HEK293T (cell line): ENCODE measurements at regions of chr16 and their contacts with region 1.

Region 1: GRCh38 chr16:1964506-1965395 is at the start of gene RPS2:
- DNase-seq: peak; percentile 100

Region 2: DNA sequence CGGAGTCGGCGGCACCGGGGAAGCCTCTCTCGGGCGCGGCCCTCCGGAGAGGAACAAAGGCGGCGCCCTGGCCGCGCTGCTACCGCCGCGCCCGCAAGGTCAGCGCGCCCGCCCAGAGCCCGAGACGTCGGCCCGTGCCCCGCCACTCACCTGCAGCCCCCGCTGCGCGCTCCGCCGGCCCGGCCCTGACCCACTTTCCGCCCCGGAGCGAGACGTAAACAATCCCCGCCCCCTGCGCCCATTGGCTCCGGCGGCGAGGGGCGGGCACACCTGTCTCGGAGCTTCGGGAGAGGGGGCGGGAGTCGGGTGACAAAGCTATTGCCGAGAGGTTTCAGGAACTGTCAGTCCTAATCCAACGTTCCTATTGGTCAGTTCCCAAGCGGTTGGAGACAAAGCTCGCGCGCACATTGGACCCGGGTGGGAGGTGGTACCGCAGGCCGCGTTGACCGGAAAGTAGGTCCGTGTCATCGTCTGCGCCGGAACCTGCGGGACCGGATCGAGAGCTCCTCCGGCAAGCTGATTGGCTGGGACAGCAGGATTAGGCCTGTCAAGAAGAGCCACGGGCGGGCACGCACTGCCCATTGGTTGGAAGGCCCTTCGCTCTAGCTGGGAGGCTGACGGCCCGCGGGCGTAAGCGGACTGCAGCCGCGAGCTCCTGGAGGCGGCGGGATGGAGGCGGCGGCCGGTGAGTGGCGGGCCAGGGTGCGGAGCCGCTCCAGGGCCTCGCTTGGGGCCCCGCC is 182.2 kb before region 1 on chr16 and contains the starts of genes NUBP2 and SPSB3:
- CTCF ChIA-PET with region 1: no interaction called
- POLR2A ChIA-PET with region 1: interaction called, 12 read pairs
- DNase-seq: peak; percentile 94

Region 3: DNA sequence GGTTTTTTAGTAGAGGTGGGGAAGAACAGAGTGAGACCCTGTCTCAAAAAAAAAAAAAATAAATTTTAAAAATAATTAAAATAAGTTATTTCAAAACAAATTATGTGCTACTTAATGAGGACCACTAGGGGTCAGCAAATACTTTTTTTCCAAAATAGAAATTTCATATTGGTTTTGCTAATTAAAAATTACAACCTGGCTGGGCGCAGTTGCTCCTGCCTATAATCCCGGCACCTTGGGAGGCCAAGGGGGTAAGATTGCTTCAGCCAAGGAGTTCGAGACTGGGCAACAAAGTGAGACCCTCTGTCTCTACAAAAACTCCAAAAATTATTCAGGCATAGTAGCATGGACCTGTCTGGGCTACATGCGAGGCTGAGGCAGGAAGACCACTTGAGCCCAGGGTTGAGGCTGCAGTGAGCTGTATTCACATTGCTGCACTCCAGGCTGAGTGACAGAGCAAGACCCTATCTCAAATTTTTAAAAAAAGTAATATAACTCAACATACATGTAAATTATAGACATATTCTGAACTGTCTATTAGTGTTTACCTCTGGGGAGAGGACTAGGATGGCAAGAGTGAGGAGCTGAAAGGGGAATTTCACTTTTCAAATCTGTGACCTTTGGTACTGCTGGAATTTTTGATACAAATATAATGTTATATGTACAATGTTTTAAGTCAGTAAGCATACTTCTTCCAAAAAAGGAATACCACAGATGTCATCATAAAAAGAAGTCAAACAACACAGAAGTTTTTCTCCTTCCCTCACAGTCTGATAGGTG is 100.9 kb before region 1 on chr16:
- CTCF ChIA-PET with region 1: no interaction called
- POLR2A ChIA-PET with region 1: interaction called, 10 read pairs
- DNase-seq: no peak

Region 4: GRCh38 chr16:1890708-1891050 is 74.1 kb before region 1 on chr16:
- CTCF ChIA-PET with region 1: no interaction called
- POLR2A ChIA-PET with region 1: no interaction called
- DNase-seq: no peak

Region 5: DNA sequence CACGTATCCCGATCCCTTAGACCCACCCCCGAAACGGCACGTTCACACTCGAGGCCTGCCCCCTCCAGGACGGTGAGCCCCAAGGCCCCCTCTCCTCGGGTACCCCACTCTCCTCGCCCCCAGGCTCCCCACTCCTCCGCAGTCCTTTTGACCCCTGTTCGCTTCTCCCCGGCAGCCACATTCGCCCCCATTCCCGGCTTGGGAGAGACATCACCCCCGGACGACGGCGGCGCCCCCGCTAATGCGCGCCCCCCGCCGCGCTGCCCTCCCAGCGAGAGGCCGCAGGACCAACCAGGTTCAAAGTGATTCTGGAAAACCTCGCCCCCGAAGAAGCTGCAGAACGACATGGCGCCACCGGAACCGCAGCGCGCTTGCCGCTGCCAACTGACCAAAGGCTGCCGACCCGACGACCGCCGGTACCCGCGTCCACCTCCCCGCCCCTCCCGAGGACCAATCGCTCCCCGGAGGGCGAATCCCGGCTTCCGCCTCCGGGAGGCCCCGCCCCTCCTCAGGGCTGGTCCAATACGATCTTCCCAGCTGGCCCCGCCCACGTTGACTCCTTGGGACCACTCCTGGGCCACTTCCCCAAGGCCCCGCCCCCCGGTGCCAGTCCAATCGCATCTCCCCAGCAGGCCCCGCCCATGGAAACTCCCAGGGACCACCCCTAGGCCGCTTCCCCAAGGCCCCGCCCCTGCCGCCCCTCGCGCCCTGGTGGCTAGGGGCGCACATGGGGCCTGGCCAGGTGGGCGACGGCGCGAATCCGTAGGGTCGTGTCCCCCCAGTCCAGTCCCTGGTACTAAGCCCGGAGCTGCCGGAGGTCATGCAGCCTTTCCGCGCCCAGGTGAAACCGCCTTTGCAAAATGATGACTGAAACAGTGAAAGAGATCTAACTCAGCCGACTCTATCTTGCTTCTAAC is 21.7 kb before region 1 on chr16 and contains the start of gene MSRB1:
- CTCF ChIA-PET with region 1: interaction called, 11 read pairs
- POLR2A ChIA-PET with region 1: interaction called, 95 read pairs
- DNase-seq: peak; percentile 100

Region 6: GRCh38 chr16:1991948-1992703 is 27.4 kb after region 1 on chr16:
- CTCF ChIA-PET with region 1: no interaction called
- POLR2A ChIA-PET with region 1: interaction called, 88 read pairs
- DNase-seq: peak; percentile 98

Region 7: DNA sequence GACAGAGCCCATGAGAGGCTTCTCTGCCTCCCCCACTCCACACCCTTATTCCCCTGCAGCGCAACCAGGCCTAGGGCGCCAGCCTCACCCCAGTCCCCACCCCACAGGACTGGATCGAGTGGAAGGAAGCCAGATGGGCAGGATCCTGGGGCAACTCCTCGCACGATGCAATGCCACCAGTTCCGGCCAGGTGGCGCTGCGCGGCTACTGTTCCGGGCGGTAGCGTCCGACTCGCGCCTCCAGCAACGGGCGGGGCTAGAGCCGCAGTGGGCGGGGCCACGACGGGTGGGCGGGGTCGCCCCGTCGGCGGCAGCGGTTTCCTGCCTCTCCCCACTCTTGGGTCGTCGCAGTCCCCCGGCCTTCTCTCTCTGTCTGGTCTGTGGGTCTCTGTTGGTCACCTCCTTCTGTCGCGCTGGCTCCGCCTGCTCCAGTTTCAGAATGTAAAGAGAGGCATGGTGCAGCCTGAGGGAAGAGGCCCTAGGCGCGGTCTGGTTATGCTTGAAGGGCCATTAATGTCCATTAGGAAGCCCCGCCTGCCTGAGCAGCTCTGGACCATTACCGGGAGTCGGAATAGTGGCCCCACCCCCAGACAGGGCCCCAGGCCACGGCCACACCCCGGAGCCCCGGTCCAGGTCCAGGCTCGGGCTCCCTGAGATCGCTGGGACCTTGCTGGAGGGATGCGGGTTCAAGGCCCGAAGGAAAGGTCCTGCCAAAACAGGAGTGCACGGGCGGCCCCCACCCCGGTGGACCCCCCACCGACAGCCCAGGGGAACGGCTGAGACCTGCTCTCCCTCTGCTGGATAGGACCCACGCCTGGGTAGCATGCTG is 58.6 kb after region 1 on chr16:
- CTCF ChIA-PET with region 1: no interaction called
- POLR2A ChIA-PET with region 1: interaction called, 15 read pairs
- DNase-seq: peak; percentile 99

Region 8: GRCh38 chr16:2071454-2072202 is 106.9 kb after region 1 on chr16:
- CTCF ChIA-PET with region 1: no interaction called
- POLR2A ChIA-PET with region 1: no interaction called
- DNase-seq: no peak

Region 9: GRCh38 chr16:2115591-2115973 is 150.8 kb after region 1 on chr16:
- CTCF ChIA-PET with region 1: no interaction called
- POLR2A ChIA-PET with region 1: no interaction called
- DNase-seq: no peak